Naive thymus-derived CD4-positive, alpha-beta T cell (primary cell): ENCODE measurements at regions of chr16 and their contacts with region 1.

Region 1: GRCh38 chr16:72664509-72665225 is 383.3 kb downstream of the ZFHX3 start:
- DNase-seq: peak; percentile 79 to 95 (median 94)
- ATAC-seq: peak; percentile 100
- H3K4me3 ChIP-seq: peak overlapping the region; percentile 73
- H3K4me3 Mint-ChIP-seq: peak overlapping the region; percentile 93 to 100 (median 100)
- H3K27ac ChIP-seq: peak overlapping the region; percentile 72
- H3K27ac Mint-ChIP-seq: peak overlapping the region; percentile 86 to 98 (median 97)
- H3K4me1 ChIP-seq: peaks cover 11 to 13% of the 10 kb centered on the region in 2 donors
- H3K4me1 Mint-ChIP-seq: peaks cover 4 to 24% (median 18%) of the 10 kb centered on the region in 7 donors
- H3K27me3 ChIP-seq: no peaks in the 10 kb centered on the region
- H3K27me3 Mint-ChIP-seq: peaks cover 0 to 16% (median 10%) of the 10 kb centered on the region in 5 donors

Region 2: DNA sequence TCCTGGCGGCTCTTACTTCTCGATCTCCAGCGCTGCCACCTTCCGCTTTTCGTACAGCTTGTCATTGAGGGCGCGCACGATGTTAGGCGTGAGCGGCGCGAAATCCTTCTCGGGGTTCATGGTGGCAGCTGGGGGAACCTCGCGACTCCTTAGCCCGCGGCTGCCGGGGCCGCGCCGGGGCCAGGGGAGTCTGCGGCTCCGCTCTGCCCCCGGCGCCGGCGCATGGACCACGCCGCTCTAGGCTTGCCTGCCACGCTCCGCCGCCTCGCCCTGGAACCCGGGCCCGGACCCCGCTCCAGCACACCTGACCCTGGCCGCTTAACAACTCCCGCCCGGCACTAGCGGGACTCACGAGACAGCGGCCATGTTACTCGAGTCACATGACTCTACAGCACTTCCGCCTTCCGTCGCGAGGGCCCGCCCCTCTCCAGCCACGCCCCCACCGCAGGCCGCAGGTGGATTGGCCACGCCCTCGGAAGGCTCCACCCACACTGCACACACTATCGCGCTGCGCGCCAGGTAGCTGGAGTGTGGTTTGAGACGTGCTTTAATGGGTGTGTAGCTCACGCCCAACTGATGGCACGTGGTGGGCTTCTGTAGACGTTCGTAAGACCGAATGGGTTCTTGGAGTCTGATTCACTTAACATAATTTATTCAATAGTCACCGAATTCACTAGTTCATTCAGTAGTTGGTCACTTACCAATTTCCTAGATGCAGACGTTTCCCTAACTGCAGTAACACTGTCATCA is 1863.7 kb before region 1 on chr16 and contains the start of gene VAC14:
- CTCF ChIA-PET with region 1: no interaction called
- POLR2A ChIA-PET with region 1: no interaction called
- intact Hi-C with region 1: loop called in 1 of 2 experiments (anchors 10 kb)
- DNase-seq: peak; percentile 96 to 99 (median 97)
- ATAC-seq: peak; percentile 99
- H3K4me3 ChIP-seq: peak within 1 kb of the TSS; percentile 90
- H3K4me3 Mint-ChIP-seq: peak within 1 kb of the TSS; percentile 90 to 98 (median 94)
- H3K27ac ChIP-seq: peak within 1 kb of the TSS; percentile 78
- H3K27ac Mint-ChIP-seq: peak within 1 kb of the TSS; percentile 84 to 95 (median 92)
- H3K4me1 ChIP-seq: peaks cover 11 to 17% of the 10 kb centered on the region in 2 donors
- H3K4me1 Mint-ChIP-seq: peaks cover 19 to 49% (median 44%) of the 10 kb centered on the region in 7 donors
- H3K27me3 ChIP-seq: no peaks in the 10 kb centered on the region
- H3K27me3 Mint-ChIP-seq: peaks cover 0 to 15% (median 0%) of the 10 kb centered on the region in 5 donors
- total RNA-seq, gene VAC14: 36.7 to 47.1 (median 45.9) TPM

Region 3: GRCh38 chr16:72008424-72009216 is 656.0 kb before region 1 on chr16 and contains the start of gene DHODH:
- CTCF ChIA-PET with region 1: no interaction called
- POLR2A ChIA-PET with region 1: no interaction called
- intact Hi-C with region 1: loop called in 1 of 2 experiments (anchors 5 kb)
- DNase-seq: peak; percentile 92 to 99 (median 97)
- ATAC-seq: peak; percentile 100
- H3K4me3 ChIP-seq: peak within 1 kb of the TSS; percentile 100
- H3K4me3 Mint-ChIP-seq: peak within 1 kb of the TSS; percentile 92 to 100 (median 98)
- H3K27ac ChIP-seq: peak within 1 kb of the TSS; percentile 62
- H3K27ac Mint-ChIP-seq: peak within 1 kb of the TSS; percentile 75 to 96 (median 89)
- H3K4me1 ChIP-seq: no peaks in the 10 kb centered on the region
- H3K4me1 Mint-ChIP-seq: peaks cover 9 to 22% (median 16%) of the 10 kb centered on the region in 7 donors
- H3K27me3 ChIP-seq: no peaks in the 10 kb centered on the region
- H3K27me3 Mint-ChIP-seq: peaks cover 0 to 3% (median 0%) of the 10 kb centered on the region in 5 donors
- total RNA-seq, gene DHODH: 4.9 to 15.6 (median 14.0) TPM

Region 4: DNA sequence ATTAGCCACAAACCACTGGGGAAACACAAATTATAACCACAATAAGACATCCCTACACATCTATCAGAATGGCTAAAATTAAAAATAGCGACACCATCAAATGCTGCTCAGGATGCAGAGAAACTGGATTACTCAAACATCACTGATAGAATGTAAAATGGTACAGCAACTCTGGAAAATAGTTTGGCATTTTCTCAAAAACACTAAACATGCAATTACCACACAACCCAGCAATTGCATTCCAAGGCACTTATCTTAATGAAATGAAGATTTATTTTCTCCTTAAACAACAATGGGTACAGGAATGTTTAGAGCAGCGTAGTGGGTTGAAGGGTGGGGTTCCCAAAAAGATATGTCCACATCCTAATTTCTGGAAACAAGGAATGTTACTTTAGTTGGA is 183.8 kb before region 1 on chr16:
- CTCF ChIA-PET with region 1: no interaction called
- POLR2A ChIA-PET with region 1: no interaction called
- intact Hi-C with region 1: loop called in 1 of 2 experiments (anchors 10 kb)
- DNase-seq: no peak
- ATAC-seq: no peak
- H3K4me3 ChIP-seq: no peak overlapping the region
- H3K4me3 Mint-ChIP-seq: no peak overlapping the region
- H3K27ac ChIP-seq: no peak overlapping the region
- H3K27ac Mint-ChIP-seq: no peak overlapping the region
- H3K4me1 ChIP-seq: peaks cover 0 to 13% of the 10 kb centered on the region in 2 donors
- H3K4me1 Mint-ChIP-seq: peaks cover 0 to 31% (median 26%) of the 10 kb centered on the region in 7 donors
- H3K27me3 ChIP-seq: no peaks in the 10 kb centered on the region
- H3K27me3 Mint-ChIP-seq: no peaks in the 10 kb centered on the region

Region 5: DNA sequence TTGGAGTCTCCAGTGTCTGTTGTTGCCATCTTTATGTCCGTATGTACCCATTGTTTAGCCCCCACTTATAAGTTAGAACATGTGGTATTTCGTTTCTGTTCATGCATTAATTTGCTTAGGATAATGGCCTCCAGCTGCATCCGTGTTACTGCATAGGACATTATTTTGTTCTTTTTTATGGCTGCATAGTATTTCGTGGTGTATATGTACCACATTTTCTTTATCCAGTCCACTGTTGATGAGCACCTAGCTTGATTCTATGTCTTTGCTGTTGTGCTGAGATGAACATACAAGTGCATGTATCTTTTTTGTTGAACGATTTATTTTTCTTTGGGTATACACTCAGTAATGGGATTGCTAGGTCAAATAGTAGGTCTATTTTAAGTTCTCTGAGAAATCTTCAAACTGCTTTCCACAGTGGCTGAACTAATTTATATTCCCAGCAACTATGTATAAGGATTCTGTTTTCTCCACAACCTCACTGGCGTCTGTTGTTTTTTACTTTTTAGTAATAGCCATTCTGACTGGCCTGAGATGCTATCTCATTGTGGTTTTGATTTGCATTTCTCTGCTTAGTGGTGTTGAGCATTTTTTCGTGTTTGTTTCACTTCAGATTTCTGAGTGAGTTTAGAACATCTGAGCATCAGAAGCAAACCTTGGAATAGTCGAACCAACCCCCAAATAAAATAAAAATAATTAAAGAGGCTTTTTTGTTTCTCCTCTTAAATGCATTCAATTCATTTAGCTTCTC is 78.5 kb after region 1 on chr16:
- CTCF ChIA-PET with region 1: no interaction called
- POLR2A ChIA-PET with region 1: no interaction called
- intact Hi-C with region 1: no loop called
- DNase-seq: no peak
- ATAC-seq: no peak
- H3K4me3 ChIP-seq: no peak overlapping the region
- H3K4me3 Mint-ChIP-seq: no peak overlapping the region
- H3K27ac ChIP-seq: no peak overlapping the region
- H3K27ac Mint-ChIP-seq: no peak overlapping the region
- H3K4me1 ChIP-seq: no peaks in the 10 kb centered on the region
- H3K4me1 Mint-ChIP-seq: no peaks in the 10 kb centered on the region
- H3K27me3 ChIP-seq: no peaks in the 10 kb centered on the region
- H3K27me3 Mint-ChIP-seq: peaks cover 0 to 2% (median 0%) of the 10 kb centered on the region in 5 donors

Region 6: DNA sequence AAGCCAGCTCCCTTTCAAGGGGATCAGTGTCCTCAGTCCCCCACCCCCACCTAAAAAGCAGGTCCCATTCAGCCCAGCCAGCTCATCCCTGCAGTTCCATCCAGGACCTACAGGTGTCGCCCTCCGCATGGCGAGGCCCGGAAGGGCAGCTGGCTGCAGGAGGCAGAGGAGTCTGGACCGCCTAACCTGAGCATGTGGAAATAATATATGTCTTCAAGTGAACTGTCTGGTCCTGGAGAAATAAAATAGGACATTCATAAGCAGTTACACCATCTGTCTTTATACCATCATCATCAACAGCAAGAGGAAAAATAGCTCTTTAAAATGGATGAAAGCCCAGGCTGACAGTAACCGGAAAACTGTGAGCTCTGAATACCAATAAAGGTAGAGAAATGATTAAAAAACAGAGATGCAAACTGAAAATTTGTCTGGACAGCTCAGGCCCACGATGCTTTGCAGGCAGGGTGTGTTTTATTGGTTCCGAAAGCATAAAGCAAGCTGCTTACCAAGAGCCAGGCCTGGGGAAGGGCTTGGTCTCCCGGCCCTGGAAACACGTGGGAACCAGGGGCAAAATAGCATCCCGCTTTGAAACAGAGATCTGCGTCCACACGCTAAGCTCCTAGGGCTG is 168.1 kb after region 1 on chr16:
- CTCF ChIA-PET with region 1: no interaction called
- POLR2A ChIA-PET with region 1: no interaction called
- intact Hi-C with region 1: loop called in 1 of 2 experiments (anchors 10 kb)
- DNase-seq: peak; percentile 7 to 83 (median 47)
- ATAC-seq: peak; percentile 82
- H3K4me3 ChIP-seq: no peak overlapping the region
- H3K4me3 Mint-ChIP-seq: no peak overlapping the region
- H3K27ac ChIP-seq: no peak overlapping the region
- H3K27ac Mint-ChIP-seq: no peak overlapping the region
- H3K4me1 ChIP-seq: no peaks in the 10 kb centered on the region
- H3K4me1 Mint-ChIP-seq: peaks cover 0 to 7% (median 0%) of the 10 kb centered on the region in 7 donors
- H3K27me3 ChIP-seq: no peaks in the 10 kb centered on the region
- H3K27me3 Mint-ChIP-seq: peaks cover 0 to 5% (median 0%) of the 10 kb centered on the region in 5 donors

Region 7: GRCh38 chr16:74296432-74297144 is 1631.9 kb after region 1 on chr16 and contains the start of gene PSMD7:
- CTCF ChIA-PET with region 1: no interaction called
- POLR2A ChIA-PET with region 1: no interaction called
- intact Hi-C with region 1: loop called in 1 of 2 experiments (anchors 1 kb)
- DNase-seq: peak; percentile 82 to 93 (median 90)
- ATAC-seq: peak; percentile 96
- H3K4me3 ChIP-seq: peak within 1 kb of the TSS; percentile 86
- H3K4me3 Mint-ChIP-seq: peak within 1 kb of the TSS; percentile 89 to 99 (median 96)
- H3K27ac ChIP-seq: peak within 1 kb of the TSS; percentile 96
- H3K27ac Mint-ChIP-seq: peak within 1 kb of the TSS; percentile 93 to 100 (median 98)
- H3K4me1 ChIP-seq: peaks cover 22 to 25% of the 10 kb centered on the region in 2 donors
- H3K4me1 Mint-ChIP-seq: peaks cover 21 to 52% (median 38%) of the 10 kb centered on the region in 7 donors
- H3K27me3 ChIP-seq: no peaks in the 10 kb centered on the region
- H3K27me3 Mint-ChIP-seq: no peaks in the 10 kb centered on the region
- total RNA-seq, gene PSMD7: 61.1 to 107 (median 71.3) TPM